A673 (cell line): ENCODE measurements at regions of chr1 and their contacts with region 1.

Region 1: GRCh38 chr1:232718928-232719927 is 86.0 kb upstream of the MAP10 start:
- DNase-seq: no peak
- H3K4me3 ChIP-seq: no peak overlapping the region
- H3K27ac ChIP-seq: no peak overlapping the region
- H3K4me1 ChIP-seq: no peaks in the 10 kb centered on the region
- H3K27me3 ChIP-seq: no peaks in the 10 kb centered on the region
- CTCF ChIP-seq: no peak

Region 2: GRCh38 chr1:232630047-232630893 is 89.0 kb before region 1 on chr1 and contains the start of gene SIPA1L2:
- CTCF ChIA-PET with region 1: no interaction called
- POLR2A ChIA-PET with region 1: no interaction called
- intact Hi-C with region 1: no loop called
- DNase-seq: peak; percentile 95
- H3K4me3 ChIP-seq: peak within 1 kb of the TSS; percentile 53
- H3K27ac ChIP-seq: no peak within 1 kb of the TSS
- H3K4me1 ChIP-seq: peaks cover 10% of the 10 kb centered on the region
- H3K27me3 ChIP-seq: peaks cover 4% of the 10 kb centered on the region
- CTCF ChIP-seq: peak; percentile 63
- total RNA-seq, gene SIPA1L2: 3.4 and 6.2 TPM in 2 replicates

Region 3: GRCh38 chr1:232689711-232690110 is 29.5 kb before region 1 on chr1:
- CTCF ChIA-PET with region 1: no interaction called
- POLR2A ChIA-PET with region 1: interaction called, 11 read pairs
- intact Hi-C with region 1: no loop called
- DNase-seq: no peak
- H3K4me3 ChIP-seq: no peak overlapping the region
- H3K27ac ChIP-seq: no peak overlapping the region
- H3K4me1 ChIP-seq: peaks cover 6% of the 10 kb centered on the region
- H3K27me3 ChIP-seq: no peaks in the 10 kb centered on the region
- CTCF ChIP-seq: no peak

Region 4: DNA sequence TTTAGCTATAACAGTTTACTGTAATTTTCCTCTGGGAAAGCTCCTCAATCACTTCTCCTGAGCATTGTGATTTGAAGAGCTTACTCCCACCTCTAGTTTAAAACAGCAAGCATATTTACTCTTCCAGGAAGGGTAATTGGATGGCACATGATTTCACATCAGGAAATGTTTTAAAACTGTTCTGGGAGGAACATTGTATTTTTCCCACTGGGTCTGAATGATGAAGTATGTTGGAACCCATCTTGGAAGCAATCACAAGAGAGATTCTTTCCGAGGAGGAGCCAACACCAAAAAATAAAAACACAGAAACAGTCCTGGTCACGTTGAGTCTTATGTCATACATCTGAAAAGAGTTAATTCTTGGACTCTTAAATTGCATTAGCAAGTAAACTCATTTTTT is 103.3 kb after region 1 on chr1:
- CTCF ChIA-PET with region 1: no interaction called
- POLR2A ChIA-PET with region 1: no interaction called
- intact Hi-C with region 1: no loop called
- DNase-seq: no peak
- H3K4me3 ChIP-seq: no peak overlapping the region
- H3K27ac ChIP-seq: no peak overlapping the region
- H3K4me1 ChIP-seq: no peaks in the 10 kb centered on the region
- H3K27me3 ChIP-seq: no peaks in the 10 kb centered on the region
- CTCF ChIP-seq: no peak